ENCODE measurements at regions of chr11 and their contacts with region 1.

Region 1: DNA sequence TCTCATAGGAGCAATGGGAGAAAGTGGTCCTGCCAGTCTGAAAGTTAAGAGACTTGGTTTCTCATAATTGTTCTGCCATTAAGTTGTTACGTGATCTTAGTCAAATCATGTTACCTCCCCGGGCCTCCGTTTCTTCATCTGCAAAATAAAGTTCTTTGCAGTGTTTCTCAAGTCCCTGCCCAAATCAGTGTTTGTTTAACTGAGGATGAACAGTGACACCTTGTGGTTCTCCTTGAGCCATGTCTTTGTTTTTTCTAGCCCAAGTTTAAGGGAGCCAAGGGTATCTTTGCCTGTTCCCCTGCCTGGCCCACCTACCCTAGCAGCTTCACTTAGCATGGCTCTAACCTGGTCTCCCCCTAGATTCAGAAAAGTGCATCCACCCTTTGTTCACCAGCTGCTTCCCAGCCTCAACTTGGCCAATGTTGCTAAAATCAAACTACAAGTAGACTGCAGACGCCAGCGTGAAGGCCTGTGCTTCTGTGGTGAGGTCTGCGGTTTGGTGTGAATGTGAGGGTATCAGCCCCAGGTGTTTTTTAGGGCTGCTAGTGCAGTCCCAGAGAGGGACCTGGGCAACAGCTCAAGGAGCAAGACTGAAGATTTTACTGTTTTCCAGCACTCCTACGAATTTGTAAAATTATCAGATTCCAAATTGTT is 35.5 kb downstream of the FZD4 start:
- DNase-seq: no peak
- H3K4me3 Mint-ChIP-seq: no peak overlapping the region
- H3K27ac Mint-ChIP-seq: no peak overlapping the region
- H3K4me1 Mint-ChIP-seq: no peaks in the 10 kb centered on the region
- H3K27me3 Mint-ChIP-seq: peaks cover 10% of the 10 kb centered on the region

Region 2: DNA sequence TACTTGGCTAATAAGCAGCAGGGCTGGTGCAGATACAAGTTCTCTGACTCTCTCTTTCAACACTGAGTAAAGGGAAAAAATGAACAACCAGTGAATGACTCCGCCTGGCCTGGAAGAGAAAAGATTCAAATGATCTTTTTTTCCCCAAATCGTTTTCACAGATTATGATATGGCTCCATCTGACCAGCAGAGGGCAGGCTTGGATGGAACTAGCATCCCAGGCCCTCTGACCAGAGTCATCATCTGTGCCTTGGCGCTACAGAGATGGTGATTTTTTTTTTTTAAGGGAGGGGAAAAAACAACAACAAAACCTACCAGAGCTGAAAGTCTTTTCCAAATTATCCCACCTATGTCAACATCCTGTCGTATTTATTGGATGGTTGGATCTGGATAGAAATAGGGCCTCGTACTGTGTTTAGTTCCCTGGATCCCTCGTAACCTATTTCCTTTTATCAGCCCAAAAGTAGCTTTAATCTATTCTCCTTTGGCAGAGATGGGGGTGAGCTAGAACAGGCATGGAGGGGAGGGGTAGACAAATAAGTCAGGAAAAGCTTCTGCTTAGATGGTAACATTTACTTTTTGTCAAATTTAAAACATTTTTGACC is 49.6 kb before region 1 on chr11:
- intact Hi-C with region 1: loop called (anchors 1 kb)
- DNase-seq: peak; percentile 14
- H3K4me3 Mint-ChIP-seq: no peak overlapping the region
- H3K27ac Mint-ChIP-seq: no peak overlapping the region
- H3K4me1 Mint-ChIP-seq: no peaks in the 10 kb centered on the region
- H3K27me3 Mint-ChIP-seq: peaks cover 6% of the 10 kb centered on the region

Measured in activated T-helper 2 cell treated with anti-CD3 and anti-CD28 coated beads, Interferon-gamma antibody, Interleukin-2, Interleukin-4, amounts not matched to agents 10 μg/mL and 5 μg/mL and 100 μg/mL, durations not matched to agents 14 hours and 24 hours and 36 hours (primary cell).